ENCODE measurements at regions of chr1 and their contacts with region 1.

Region 1: DNA sequence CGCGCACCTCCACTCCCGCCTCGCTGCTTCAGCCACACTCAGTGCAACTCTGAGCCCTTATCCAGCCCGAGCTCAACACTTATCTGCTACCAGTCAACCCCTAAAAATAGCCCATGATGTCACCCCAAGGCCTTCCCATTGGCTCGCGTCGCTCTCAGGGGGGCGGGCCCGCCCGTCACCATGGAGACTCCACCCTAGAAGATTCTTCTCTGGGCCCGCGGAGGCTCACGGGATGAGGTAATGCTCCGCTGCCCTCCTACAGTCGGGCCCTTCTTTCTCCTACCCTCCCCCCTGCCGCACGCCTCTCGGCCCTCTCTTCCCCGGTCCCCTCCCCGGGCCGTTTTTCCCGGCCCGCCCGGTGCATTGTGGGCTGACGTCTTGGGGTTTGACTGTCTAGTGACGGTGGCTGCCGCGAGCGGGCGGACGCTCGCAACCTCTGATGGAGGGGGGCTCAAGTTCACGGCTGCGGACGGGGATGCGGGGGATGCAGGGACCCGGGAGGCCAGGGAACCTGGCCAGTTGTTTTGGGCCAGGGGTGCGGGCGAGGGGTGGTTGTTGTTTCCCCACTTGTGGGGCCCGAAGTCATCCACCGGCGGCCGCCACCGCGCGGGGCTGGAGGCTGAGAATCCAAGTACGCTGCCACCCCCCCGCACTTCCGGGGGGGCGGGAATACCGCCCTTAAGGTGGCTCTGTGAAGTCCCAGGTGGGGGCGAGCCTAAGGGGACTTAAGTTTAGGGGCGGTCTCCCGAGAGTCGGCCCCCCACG is at the start of gene JUN:
- DNase-seq: peak; percentile 98
- H3K4me3 Mint-ChIP-seq: peak within 1 kb of the TSS; percentile 97
- H3K27ac Mint-ChIP-seq: peak within 1 kb of the TSS; percentile 99
- H3K4me1 Mint-ChIP-seq: peaks cover 41% of the 10 kb centered on the region
- H3K27me3 Mint-ChIP-seq: peaks cover 13% of the 10 kb centered on the region
- CTCF ChIP-seq: no peak
- total RNA-seq, gene JUN: 76.5 and 89.3 TPM in 2 replicates

Region 2: DNA sequence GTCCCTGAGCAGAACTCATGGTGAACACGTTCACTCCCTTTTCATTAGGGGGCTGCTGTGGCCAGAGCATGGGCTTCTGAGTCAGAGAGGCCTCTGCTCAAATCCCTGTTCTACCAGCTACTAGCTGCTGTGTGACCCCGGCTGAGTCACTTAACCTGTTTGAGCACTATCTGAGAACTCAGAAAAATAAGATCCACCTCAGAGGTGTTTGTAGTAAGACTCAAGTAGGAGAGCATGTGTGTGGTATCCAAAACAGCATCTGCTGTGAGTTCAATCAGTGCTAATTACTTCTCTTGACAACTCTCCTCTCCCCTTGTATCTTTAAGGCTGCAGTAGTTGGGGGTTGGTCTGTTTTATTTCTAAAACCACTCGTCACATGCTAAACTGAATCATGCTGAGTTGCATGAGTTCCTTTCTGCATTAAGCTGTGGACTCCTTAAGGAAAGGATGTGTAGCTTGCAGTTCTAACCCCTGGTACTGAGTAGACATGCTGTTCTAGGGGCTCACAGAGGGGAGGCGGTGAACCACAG is 39.4 kb after region 1 on chr1:
- CTCF ChIA-PET with region 1: no interaction called
- intact Hi-C with region 1: no loop called
- DNase-seq: peak; percentile 66
- H3K4me3 Mint-ChIP-seq: no peak overlapping the region
- H3K27ac Mint-ChIP-seq: peak overlapping the region; percentile 35
- H3K4me1 Mint-ChIP-seq: peaks cover 33% of the 10 kb centered on the region
- H3K27me3 Mint-ChIP-seq: no peaks in the 10 kb centered on the region
- CTCF ChIP-seq: no peak

Region 3: DNA sequence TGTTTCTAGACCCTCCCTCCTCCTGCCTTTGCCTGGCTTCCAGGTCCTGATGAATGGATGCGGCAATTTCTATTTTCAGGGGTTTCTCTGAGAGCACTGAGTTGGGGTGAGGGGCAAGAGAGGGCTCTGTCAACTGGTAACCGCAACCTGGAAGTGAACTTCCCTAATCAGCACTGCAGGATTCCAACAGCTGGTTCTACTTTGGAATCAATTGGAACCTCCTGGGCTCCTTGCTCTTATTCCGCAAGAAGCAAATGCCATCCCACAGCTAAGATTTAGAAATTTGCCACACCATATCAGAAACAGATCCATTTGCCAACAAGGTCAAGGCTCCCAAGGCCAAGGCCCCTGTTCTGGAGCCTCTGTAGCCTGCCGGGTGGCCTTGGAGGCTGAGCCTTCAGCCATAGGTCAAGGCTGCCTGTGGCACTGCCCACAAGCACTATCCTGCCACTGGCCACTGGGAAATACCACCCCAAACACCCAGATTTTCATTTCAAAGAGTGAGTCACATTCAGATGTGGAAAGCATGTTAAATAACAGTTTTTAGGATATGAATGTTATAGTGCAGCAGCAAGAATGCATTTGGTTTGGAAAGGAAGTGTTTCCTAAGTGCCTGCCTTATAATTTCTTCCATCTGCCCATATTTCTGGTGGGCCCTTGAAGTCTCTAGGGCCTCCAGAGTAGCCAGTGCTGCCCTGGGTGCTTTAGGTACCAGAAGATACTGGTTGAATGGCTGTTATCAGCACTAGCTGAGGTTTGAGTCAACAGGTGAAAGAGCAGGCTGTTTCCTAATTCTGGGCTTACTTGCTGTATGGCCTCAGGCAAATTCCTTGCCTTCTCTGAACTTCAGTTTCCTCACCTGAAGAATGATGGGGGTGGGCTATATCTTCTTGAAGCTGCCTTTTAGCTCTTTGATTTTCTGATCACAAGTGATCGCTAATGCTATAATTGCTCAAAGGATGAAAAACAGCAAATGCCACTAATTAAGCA is 56.0 kb after region 1 on chr1:
- CTCF ChIA-PET with region 1: no interaction called
- intact Hi-C with region 1: no loop called
- DNase-seq: no peak
- H3K4me3 Mint-ChIP-seq: no peak overlapping the region
- H3K27ac Mint-ChIP-seq: no peak overlapping the region
- H3K4me1 Mint-ChIP-seq: peaks cover 29% of the 10 kb centered on the region
- H3K27me3 Mint-ChIP-seq: no peaks in the 10 kb centered on the region
- CTCF ChIP-seq: no peak

Region 4: GRCh38 chr1:58874757-58875755 is 90.9 kb after region 1 on chr1:
- CTCF ChIA-PET with region 1: interaction called, 9 read pairs
- intact Hi-C with region 1: loop called (anchors 1 kb)
- DNase-seq: peak; percentile 83
- H3K4me3 Mint-ChIP-seq: peak overlapping the region; percentile 22
- H3K27ac Mint-ChIP-seq: peak overlapping the region; percentile 79
- H3K4me1 Mint-ChIP-seq: peaks cover 39% of the 10 kb centered on the region
- H3K27me3 Mint-ChIP-seq: no peaks in the 10 kb centered on the region
- CTCF ChIP-seq: no peak

Region 5: GRCh38 chr1:58932859-58933598 is 148.9 kb after region 1 on chr1:
- CTCF ChIA-PET with region 1: no interaction called
- intact Hi-C with region 1: loop called (anchors 2 kb)
- DNase-seq: peak; percentile 96
- H3K4me3 Mint-ChIP-seq: no peak overlapping the region
- H3K27ac Mint-ChIP-seq: peak overlapping the region; percentile 83
- H3K4me1 Mint-ChIP-seq: peaks cover 73% of the 10 kb centered on the region
- H3K27me3 Mint-ChIP-seq: no peaks in the 10 kb centered on the region
- CTCF ChIP-seq: no peak

Region 6: GRCh38 chr1:59107516-59107915 is 323.3 kb after region 1 on chr1:
- CTCF ChIA-PET with region 1: no interaction called
- intact Hi-C with region 1: no loop called
- DNase-seq: no peak
- H3K4me3 Mint-ChIP-seq: no peak overlapping the region
- H3K27ac Mint-ChIP-seq: no peak overlapping the region
- H3K4me1 Mint-ChIP-seq: peaks cover 4% of the 10 kb centered on the region
- H3K27me3 Mint-ChIP-seq: no peaks in the 10 kb centered on the region
- CTCF ChIP-seq: no peak

Region 7: GRCh38 chr1:59146651-59147358 is 362.6 kb after region 1 on chr1:
- CTCF ChIA-PET with region 1: no interaction called
- intact Hi-C with region 1: loop called (anchors 2 kb)
- DNase-seq: peak; percentile 67
- H3K4me3 Mint-ChIP-seq: peak overlapping the region; percentile 63
- H3K27ac Mint-ChIP-seq: peak overlapping the region; percentile 49
- H3K4me1 Mint-ChIP-seq: peaks cover 47% of the 10 kb centered on the region
- H3K27me3 Mint-ChIP-seq: no peaks in the 10 kb centered on the region
- CTCF ChIP-seq: no peak

Region 8: DNA sequence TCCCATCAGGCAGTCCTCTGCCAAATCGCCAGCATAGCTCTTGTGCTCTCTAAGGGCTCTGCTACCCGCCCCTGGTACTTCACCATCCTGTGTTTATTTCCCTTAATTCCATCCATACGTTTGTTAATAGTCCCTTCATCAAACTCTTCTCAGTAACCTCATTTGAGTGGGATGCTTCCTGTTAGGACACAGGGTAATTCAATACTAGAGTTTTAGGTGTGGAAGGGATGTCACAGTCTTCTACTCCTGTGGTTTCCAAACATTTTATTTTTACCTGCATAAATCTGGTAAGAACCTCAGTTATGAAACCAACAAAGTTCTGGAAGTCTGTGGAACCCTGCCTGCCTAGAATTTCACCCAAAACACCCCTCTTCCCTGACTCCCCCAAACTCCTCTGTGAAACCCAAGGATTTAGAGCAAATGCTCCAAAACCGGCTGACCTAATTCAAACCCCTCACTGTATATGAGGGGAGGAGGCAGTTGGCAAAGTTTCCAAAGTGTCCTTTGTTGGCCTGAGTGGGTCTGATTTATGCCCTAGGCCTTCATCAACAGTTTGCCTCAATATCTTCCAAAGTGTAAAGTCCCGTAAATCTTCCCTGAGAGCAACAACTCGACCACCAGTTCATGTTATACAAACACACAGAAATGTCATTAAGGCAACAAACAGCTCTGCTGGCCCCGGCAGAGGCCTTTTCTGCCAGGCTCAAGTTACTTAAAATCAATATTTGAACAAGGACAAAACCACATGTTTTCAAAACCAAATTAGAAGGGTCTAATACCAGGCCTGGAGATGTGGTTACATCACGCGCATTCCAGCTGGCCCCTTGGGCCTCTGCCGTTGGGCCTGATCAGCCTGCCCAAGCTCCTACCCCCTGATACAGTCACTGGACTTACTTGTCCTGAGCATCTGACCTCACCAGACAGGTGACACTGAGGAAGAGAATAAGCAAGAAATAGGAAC is 430.4 kb after region 1 on chr1:
- CTCF ChIA-PET with region 1: no interaction called
- intact Hi-C with region 1: no loop called
- DNase-seq: peak; percentile 54
- H3K4me3 Mint-ChIP-seq: peak overlapping the region; percentile 8
- H3K27ac Mint-ChIP-seq: peak overlapping the region; percentile 22
- H3K4me1 Mint-ChIP-seq: peaks cover 24% of the 10 kb centered on the region
- H3K27me3 Mint-ChIP-seq: no peaks in the 10 kb centered on the region
- CTCF ChIP-seq: no peak

Region 9: DNA sequence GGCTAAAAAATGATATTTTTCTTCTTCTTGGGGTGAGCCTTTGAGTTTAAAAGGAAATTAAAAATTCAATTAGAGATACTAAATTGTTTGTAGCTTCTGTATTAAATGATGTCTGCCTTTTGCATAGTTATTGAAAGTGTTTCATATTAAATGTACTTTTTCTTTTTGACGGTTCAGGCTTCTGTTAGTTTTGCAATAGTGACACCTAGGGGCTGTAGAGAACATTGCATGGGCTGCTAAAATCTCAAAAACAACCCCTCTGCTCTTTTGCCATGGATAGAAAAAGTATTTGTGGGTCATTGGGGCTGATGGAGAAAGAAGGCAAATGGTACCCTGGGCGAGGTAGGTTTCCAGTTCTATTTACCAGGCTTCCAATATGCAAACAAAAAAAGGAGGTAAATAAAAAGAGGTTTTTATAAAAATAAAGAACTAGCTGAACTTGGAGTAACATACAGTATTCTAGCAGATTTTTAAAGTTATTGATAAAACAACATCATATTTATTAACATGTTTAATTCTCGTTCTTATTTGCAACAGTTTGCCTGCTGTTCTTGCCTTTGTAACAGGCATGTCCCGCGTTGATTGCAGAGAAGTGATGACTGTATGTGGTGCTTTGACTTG is 915.2 kb after region 1 on chr1:
- CTCF ChIA-PET with region 1: interaction called, 3 read pairs
- intact Hi-C with region 1: loop called (anchors 2 kb)
- DNase-seq: peak; percentile 31
- H3K4me3 Mint-ChIP-seq: no peak overlapping the region
- H3K27ac Mint-ChIP-seq: no peak overlapping the region
- H3K4me1 Mint-ChIP-seq: peaks cover 22% of the 10 kb centered on the region
- H3K27me3 Mint-ChIP-seq: no peaks in the 10 kb centered on the region
- CTCF ChIP-seq: peak; percentile 90